ENCODE measurements at regions of chrX and their contacts with region 1.

Region 1: GRCh38 chrX:12080265-12080664 is 58.0 kb upstream of the FRMPD4 start:
- DNase-seq: no peak
- ATAC-seq: no peak
- H3K4me3 ChIP-seq: no peak overlapping the region
- H3K27ac ChIP-seq: no peak overlapping the region
- H3K4me1 ChIP-seq: no peaks in the 10 kb centered on the region
- H3K27me3 ChIP-seq: peaks cover 0 to 4% (median 0%) of the 10 kb centered on the region in 3 donors
- CTCF ChIP-seq: peak; percentile 28

Region 2: DNA sequence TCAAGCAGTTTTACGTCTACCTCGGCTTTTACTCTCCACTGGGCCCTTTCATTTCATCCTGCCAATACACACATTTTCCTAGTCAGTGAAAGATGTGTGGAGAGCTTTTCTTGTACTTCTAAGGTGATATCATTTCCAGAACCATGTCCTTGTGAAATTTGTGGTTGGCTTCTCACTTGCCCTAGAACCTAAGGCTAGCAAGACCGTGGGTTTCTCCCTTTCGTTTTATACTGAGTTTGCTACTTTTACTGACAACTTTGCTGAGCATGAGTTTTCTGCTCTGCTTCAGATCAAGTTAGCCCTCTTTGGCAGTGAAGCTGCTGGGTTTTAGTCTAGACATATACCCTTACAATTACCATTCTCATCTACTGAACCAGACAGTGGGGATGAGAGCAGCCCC is 37.6 kb before region 1 on chrX:
- intact Hi-C with region 1: no loop called
- DNase-seq: no peak
- ATAC-seq: no peak
- H3K4me3 ChIP-seq: no peak overlapping the region
- H3K27ac ChIP-seq: no peak overlapping the region
- H3K4me1 ChIP-seq: no peaks in the 10 kb centered on the region
- H3K27me3 ChIP-seq: no peaks in the 10 kb centered on the region
- CTCF ChIP-seq: no peak

Region 3: GRCh38 chrX:12701628-12702027 is 621.4 kb after region 1 on chrX:
- intact Hi-C with region 1: loop called in 1 of 2 experiments (anchors 5 kb)
- DNase-seq: peak in 1 of 2 donors; percentile 20
- ATAC-seq: peak; percentile 65 to 87 (median 80)
- H3K4me3 ChIP-seq: no peak overlapping the region
- H3K27ac ChIP-seq: no peak overlapping the region
- H3K4me1 ChIP-seq: no peaks in the 10 kb centered on the region
- H3K27me3 ChIP-seq: peaks cover 0 to 9% (median 0%) of the 10 kb centered on the region in 3 donors
- CTCF ChIP-seq: peak; percentile 29